Sigmoid colon (tissue), 7 donors: ENCODE measurements at regions of chr3 and their contacts with region 1.

Region 1: DNA sequence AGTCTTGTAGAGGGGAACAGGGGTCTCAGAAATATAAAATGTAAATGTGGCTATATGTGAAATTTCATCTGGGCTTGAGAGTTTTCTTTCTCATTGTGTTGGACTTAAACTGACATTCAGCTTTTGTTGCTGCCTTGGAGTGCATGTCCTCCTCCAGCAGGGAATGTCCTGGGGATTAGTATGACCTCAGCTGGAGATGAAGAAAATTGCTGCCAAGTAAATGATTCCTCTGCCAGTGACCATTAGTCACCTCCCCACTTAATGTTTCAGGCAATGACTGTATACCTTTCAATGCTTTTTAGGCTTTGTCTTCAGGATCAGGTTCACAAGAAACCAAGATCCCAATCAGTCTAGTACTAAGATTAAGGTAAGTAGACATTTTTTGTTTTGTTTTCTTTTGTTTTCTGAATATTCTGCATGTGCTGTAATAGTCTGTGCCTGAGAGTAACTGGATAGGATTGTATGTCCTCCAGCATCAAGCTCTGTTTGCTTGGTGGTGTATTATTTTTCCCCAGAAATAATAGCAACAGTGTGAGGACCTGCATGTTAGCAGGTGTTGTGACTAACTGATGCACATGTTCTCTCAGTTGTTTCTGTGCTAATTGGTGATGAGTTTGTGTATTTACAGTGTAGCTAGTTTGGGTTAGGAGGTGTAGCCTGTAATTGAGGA is 18.1 kb upstream of the SLC22A13 start:
- DNase-seq: no peak
- H3K4me3 ChIP-seq: no peak overlapping the region
- H3K27ac ChIP-seq: no peak overlapping the region
- H3K4me1 ChIP-seq: peaks cover 0 to 8% (median 2%) of the 10 kb centered on the region in 4 donors
- H3K27me3 ChIP-seq: no peaks in the 10 kb centered on the region
- CTCF ChIP-seq: no peak
- EP300 ChIP-seq: no peak
- POLR2A ChIP-seq: no peak

Region 2: DNA sequence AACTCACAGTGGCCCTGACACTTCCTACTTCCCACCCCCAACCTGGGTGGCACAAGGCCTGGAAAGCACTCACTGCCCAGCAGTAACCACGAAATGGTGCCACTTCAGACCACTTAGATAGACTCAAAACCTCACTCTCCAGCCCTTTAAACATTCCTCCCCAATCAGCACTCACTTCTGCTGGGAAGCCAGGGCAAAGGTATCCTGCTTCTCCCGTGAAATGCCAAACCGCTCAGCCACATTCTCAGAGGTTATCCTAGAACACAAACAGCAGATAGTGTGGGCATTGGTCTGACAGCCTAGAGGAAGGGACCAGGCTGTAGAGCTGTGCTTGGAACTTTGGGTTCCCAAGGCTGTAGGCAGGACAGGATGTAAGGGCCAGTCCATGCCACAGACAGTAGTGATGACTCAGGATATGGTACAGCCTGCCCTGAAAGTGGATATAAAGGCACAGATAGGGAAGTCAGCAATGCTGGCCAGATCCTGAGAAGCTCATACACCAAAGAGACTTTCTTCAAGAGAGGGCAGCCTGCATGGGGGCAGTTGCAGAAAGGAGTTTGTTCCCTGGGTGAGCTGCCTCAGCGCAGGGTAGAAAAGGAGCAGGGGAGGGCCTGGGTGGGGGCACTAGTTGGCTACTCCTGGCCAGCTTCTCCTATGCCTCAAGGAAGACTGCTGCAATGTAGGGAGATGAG is 119.7 kb before region 1 on chr3:
- intact Hi-C with region 1: loop called (anchors 10 kb)
- DNase-seq: peak; percentile 26
- H3K4me3 ChIP-seq: no peak overlapping the region
- H3K27ac ChIP-seq: no peak overlapping the region
- H3K4me1 ChIP-seq: peaks cover 0 to 5% (median 0%) of the 10 kb centered on the region in 4 donors
- H3K27me3 ChIP-seq: no peaks in the 10 kb centered on the region
- CTCF ChIP-seq: no peak
- EP300 ChIP-seq: no peak
- POLR2A ChIP-seq: no peak

Region 3: DNA sequence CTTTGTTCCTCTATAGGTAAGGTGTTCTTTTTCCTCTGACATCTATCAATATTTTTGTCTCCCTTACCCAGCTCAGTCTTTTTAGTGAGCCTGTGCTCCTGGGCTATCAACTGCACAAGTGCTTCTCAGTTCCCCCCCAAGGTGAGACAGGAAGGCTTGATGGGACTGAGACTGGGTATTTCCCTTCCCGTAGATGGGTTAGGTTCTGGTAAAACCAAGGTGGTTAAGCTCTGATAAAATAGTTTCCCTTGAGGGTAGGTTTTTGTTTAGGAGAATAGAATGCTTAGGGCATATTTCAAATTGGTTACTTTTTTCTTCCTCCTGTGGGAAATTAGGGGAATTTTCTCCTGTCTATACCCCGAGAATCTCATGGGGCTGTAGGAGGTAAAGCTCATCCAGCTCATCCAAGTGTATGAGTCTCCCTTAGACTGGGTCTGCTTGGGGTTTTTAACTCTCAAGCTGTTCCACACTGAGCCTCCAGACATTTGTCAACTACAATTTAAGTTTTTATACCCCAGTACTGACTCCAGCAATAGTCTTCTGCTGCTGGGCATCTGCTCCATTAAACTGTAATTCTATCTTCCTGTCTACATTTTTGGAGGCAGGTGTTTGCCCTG is 37.3 kb before region 1 on chr3:
- intact Hi-C with region 1: no loop called
- DNase-seq: no peak
- H3K4me3 ChIP-seq: no peak overlapping the region
- H3K27ac ChIP-seq: no peak overlapping the region
- H3K4me1 ChIP-seq: peaks cover 0 to 6% (median 0%) of the 10 kb centered on the region in 4 donors
- H3K27me3 ChIP-seq: no peaks in the 10 kb centered on the region
- CTCF ChIP-seq: no peak
- EP300 ChIP-seq: no peak
- POLR2A ChIP-seq: no peak

Region 4: GRCh38 chr3:38313695-38314094 is 66.2 kb after region 1 on chr3:
- intact Hi-C with region 1: no loop called
- DNase-seq: no peak
- H3K4me3 ChIP-seq: no peak overlapping the region
- H3K27ac ChIP-seq: no peak overlapping the region
- H3K4me1 ChIP-seq: no peaks in the 10 kb centered on the region
- H3K27me3 ChIP-seq: no peaks in the 10 kb centered on the region
- CTCF ChIP-seq: no peak
- EP300 ChIP-seq: no peak
- POLR2A ChIP-seq: no peak